ENCODE measurements at regions of chr7 and their contacts with region 1.

Region 1: DNA sequence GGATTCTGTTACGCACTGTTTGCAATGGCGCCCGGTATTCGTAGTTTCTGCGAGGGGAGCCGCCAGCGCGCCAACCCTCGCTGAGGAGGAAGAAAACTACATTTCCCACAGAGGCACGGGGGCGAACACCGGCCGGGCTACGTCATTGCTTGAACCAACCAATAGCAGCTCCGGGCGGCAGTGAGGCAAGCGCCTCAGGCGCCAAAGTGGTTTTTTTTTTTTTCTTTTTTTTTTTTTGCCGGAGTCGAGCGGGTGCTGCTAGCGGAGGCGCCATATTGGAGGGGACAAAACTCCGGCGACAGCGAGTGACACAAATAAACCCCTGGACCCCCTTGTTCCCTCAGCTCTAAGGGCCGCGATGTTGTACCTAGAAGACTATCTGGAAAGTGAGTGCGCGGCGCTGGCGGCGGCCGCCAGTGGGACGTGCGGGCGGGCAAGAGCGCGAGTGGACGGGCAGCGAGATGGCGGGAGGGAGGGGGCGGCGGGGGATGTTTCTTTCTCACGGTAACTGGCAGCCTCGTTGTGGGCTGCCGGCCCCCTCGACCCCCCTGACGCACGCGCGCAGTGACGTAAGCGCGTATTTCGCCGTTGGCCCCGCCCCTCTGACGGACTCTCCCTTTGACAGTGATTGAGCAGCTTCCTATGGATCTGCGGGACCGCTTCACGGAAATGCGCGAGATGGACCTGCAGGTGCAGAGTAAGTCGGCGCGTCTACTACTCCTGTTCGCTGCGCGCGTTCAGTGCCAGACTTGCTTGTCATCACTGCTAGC is at the start of gene ING3:
- DNase-seq: peak; percentile 97 to 100 (median 98)
- ATAC-seq: peak; percentile 91
- H3K4me3 ChIP-seq: peak within 1 kb of the TSS; percentile 55
- H3K27ac ChIP-seq: peak within 1 kb of the TSS; percentile 95
- H3K4me1 ChIP-seq: peaks cover 0 to 5% of the 10 kb centered on the region in 2 experiments; a peak in 2 of 5 replicates
- H3K27me3 ChIP-seq: no peaks in the 10 kb centered on the region
- CTCF ChIP-seq: no peak
- EP300 ChIP-seq: peak; percentile 65
- POLR2A ChIP-seq: peak; percentile 95
- RAD21 ChIP-seq: no peak; a peak in 1 of 4 replicates
- polyA plus RNA-seq, gene ING3: 216 to 233 TPM

Region 2: DNA sequence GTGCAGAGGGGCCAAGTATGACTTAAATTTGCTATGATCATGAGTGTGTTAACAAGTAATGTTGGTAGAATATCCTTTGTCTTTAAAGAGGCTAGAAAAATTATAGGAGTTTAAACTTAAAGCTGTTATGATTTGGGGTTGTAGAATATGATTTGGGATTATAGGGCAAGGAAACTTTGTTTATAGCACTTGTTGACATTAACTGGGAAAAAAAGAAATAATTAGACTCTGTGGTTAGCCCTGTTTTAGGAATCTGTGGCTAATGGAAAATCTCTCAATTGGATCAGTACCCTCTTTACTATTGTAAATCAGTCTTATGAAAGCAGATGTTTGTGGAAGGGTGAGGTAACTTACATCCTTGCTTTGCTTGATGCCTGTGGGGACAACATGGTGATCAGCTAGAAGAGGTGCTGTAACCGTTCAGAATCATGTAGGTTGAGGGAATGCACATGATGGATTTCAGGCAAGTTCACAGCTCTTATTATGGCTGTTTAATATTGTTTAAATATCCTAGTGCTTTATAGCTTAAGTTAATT is 11.0 kb after region 1 on chr7:
- CTCF ChIA-PET with region 1: no interaction called
- POLR2A ChIA-PET with region 1: interaction called, 23 read pairs
- in situ Hi-C with region 1: no loop called
- intact Hi-C with region 1: no loop called
- DNase-seq: no peak
- ATAC-seq: no peak
- H3K4me3 ChIP-seq: no peak overlapping the region
- H3K27ac ChIP-seq: no peak overlapping the region
- H3K4me1 ChIP-seq: no peaks in the 10 kb centered on the region
- H3K27me3 ChIP-seq: no peaks in the 10 kb centered on the region
- CTCF ChIP-seq: no peak
- EP300 ChIP-seq: no peak
- POLR2A ChIP-seq: no peak
- RAD21 ChIP-seq: no peak